ENCODE measurements at regions of chr10 and their contacts with region 1.

Region 1: DNA sequence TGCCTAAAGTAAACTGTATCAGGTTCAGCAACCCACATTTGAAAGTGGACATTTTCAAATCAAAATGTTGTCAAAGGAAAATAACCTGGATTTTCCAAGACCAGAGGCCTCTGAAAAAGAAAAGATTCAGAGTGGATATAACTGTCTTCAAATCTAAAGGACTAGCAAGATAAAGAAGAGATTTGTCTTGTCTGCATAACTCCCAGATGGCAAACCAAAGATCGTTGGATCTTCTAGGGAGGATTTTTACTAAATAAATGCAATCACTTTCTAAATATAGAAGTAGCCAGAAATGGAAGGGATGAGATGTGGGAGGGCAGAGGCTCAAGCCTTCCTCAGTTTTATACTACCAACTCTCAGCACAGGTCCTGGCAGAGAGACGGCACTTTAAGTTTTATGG is 39.0 kb downstream of the CABCOCO1 start:
- DNase-seq: no peak

Region 2: DNA sequence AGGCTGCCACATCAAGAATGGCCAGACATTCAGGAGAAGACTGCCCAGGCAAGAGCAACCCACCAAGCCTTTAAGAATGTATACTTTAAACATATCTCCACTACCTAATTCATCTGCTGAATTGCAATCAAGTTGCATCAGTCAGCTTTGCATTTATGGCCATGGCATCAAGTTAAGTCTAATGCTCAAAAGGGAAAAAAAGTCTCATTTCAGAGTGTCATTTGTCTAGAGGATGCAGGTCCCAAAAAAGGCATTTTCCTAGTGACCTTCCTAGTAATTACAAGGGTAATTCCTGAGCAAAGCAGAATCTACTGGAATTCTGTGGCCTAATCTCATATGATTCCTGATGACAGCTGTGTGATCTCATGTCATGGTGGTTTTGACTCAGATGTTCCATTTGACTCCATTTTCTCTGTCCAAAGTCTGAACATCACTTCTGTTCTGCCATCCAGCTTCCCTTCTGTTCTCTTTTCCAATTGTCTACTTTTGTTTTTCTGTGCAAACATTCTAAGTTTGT is 46.3 kb before region 1 on chr10:
- intact Hi-C with region 1: loop called in 1 of 2 experiments (anchors 2 kb)
- DNase-seq: no peak

Measured in posterior vena cava (tissue), 2 donors.